HCT116 (cell line): ENCODE measurements at regions of chr7 and their contacts with region 1.

Region 1: GRCh38 chr7:24819916-24820689 is 62.8 kb upstream of the GSDME start:
- DNase-seq: peak; percentile 84
- ATAC-seq: peak; percentile 69
- H3K4me3 ChIP-seq: no peak overlapping the region; a peak in 1 of 4 replicates
- H3K27ac ChIP-seq: peak overlapping the region; percentile 84
- H3K4me1 ChIP-seq: peaks cover 48 to 54% of the 10 kb centered on the region in 2 experiments
- H3K27me3 ChIP-seq: no peaks in the 10 kb centered on the region
- CTCF ChIP-seq: peak; percentile 87 to 96 (median 87)
- POLR2A ChIP-seq: no peak
- RAD21 ChIP-seq: peak; percentile 97

Region 2: DNA sequence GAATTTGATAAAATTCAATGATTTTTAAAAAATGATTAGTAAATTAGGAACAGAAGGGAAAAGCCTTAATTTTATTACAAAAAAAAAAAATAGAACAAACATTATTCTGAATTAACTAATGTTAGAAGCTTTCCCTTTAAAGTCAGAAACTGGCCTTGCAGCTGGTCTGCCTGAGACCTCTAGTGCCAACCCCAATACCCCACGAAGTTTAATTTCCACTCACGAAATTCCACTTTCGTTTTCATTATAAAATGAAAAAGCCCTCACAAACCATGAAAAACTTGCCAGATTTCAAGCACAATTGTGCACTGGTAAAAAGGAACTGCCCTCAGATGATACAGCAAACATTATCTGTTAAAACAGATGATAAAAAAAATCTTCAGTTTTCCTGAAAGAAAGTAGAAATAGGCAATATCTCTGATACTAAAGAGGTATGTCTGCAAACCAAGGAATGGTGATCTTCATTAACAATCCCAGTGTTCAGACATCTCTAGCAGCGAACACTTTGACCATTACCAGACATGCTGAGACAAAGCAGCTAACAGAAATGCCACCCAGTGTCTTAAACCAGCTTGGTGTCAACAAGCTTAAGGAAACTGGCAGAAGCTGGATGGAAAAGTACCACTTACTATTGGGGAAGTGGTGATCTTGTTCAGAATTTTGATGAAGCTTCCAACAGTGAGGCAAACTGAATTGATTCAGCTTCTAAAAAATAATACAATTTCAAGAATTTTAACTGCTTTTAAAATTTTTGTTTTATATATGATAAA is 166.6 kb before region 1 on chr7:
- CTCF ChIA-PET with region 1: no interaction called
- POLR2A ChIA-PET with region 1: no interaction called
- RAD21 ChIA-PET with region 1: no interaction called
- intact Hi-C with region 1: no loop called
- DNase-seq: no peak
- ATAC-seq: no peak
- H3K4me3 ChIP-seq: no peak overlapping the region
- H3K27ac ChIP-seq: no peak overlapping the region
- H3K4me1 ChIP-seq: no peaks in the 10 kb centered on the region
- H3K27me3 ChIP-seq: no peaks in the 10 kb centered on the region
- CTCF ChIP-seq: no peak
- POLR2A ChIP-seq: no peak
- RAD21 ChIP-seq: no peak

Region 3: GRCh38 chr7:24882989-24883621 is 63.0 kb after region 1 on chr7:
- CTCF ChIA-PET with region 1: no interaction called
- POLR2A ChIA-PET with region 1: no interaction called
- RAD21 ChIA-PET with region 1: no interaction called
- intact Hi-C with region 1: loop called (anchors 1 kb)
- DNase-seq: no peak
- ATAC-seq: no peak; the same call in 1 of the 2 replicates
- H3K4me3 ChIP-seq: no peak overlapping the region
- H3K27ac ChIP-seq: no peak overlapping the region
- H3K4me1 ChIP-seq: peaks cover 4 to 6% of the 10 kb centered on the region in 2 experiments; a peak in 1 of 4 replicates
- H3K27me3 ChIP-seq: no peaks in the 10 kb centered on the region
- CTCF ChIP-seq: no peak
- POLR2A ChIP-seq: no peak
- RAD21 ChIP-seq: no peak

Region 4: DNA sequence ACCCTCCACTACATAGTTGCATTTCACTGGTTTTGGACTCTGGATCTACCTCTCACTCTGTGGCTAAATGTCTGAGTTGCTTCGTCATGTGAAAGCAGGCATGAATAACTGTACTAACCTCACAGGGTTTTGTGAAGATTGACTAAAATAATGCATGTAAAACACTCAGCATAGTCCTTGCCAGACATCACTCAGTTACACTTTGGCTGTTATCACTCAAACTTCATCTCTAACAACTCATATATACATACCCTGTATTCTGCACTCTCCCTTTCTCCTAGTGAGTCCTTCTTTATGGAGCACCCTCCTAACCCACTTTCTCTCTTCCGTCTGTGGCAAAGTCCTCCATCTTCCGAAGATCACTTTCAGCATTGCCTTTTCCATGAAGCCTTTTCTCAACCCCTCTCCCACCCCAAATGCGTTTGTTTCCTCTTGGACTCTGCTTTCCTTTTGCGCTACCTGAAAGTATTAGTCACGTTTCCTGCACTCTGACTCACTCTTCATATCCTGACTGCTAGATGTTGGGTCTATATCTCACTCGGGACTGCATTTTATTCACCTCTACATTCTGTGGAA is 87.3 kb after region 1 on chr7:
- CTCF ChIA-PET with region 1: interaction called, 3 read pairs
- POLR2A ChIA-PET with region 1: no interaction called
- RAD21 ChIA-PET with region 1: no interaction called
- intact Hi-C with region 1: loop called (anchors 5 kb)
- DNase-seq: peak; percentile 65
- ATAC-seq: peak; percentile 77
- H3K4me3 ChIP-seq: peak overlapping the region; percentile 32 to 45
- H3K27ac ChIP-seq: peak overlapping the region; percentile 90
- H3K4me1 ChIP-seq: peaks cover 64 to 91% of the 10 kb centered on the region in 2 experiments
- H3K27me3 ChIP-seq: no peaks in the 10 kb centered on the region
- CTCF ChIP-seq: no peak
- POLR2A ChIP-seq: no peak
- RAD21 ChIP-seq: peak; percentile 25; the same call in 1 of the 2 replicates

Region 5: GRCh38 chr7:24979863-24980533 is 159.9 kb after region 1 on chr7 and contains the start of gene OSBPL3:
- CTCF ChIA-PET with region 1: interaction called, 9 read pairs
- POLR2A ChIA-PET with region 1: interaction called, 9 read pairs
- RAD21 ChIA-PET with region 1: interaction called in 1 of 2 experiments, 3 read pairs
- intact Hi-C with region 1: loop called (anchors 1 kb)
- DNase-seq: peak; percentile 92
- ATAC-seq: peak; percentile 80
- H3K4me3 ChIP-seq: peak within 1 kb of the TSS; percentile 55 to 66
- H3K27ac ChIP-seq: peak within 1 kb of the TSS; percentile 89
- H3K4me1 ChIP-seq: peaks cover 14 to 51% of the 10 kb centered on the region in 2 experiments
- H3K27me3 ChIP-seq: no peaks in the 10 kb centered on the region
- CTCF ChIP-seq: no peak
- POLR2A ChIP-seq: peak; percentile 24
- RAD21 ChIP-seq: peak; percentile 35
- total RNA-seq, gene OSBPL3: 36.8 TPM

Region 6: GRCh38 chr7:25069900-25070443 is 249.9 kb after region 1 on chr7:
- CTCF ChIA-PET with region 1: interaction called, 13 read pairs
- POLR2A ChIA-PET with region 1: no interaction called
- RAD21 ChIA-PET with region 1: interaction called in 1 of 2 experiments, 6 read pairs
- intact Hi-C with region 1: loop called (anchors 1 kb)
- DNase-seq: peak; percentile 72
- ATAC-seq: peak; percentile 77
- H3K4me3 ChIP-seq: peak overlapping the region in 1 of 2 experiments; percentile 15; a peak in 1 of 4 replicates
- H3K27ac ChIP-seq: no peak overlapping the region
- H3K4me1 ChIP-seq: peaks cover 0 to 23% of the 10 kb centered on the region in 2 experiments; a peak in 2 of 4 replicates
- H3K27me3 ChIP-seq: no peaks in the 10 kb centered on the region
- CTCF ChIP-seq: peak; percentile 73 to 86 (median 80)
- POLR2A ChIP-seq: no peak
- RAD21 ChIP-seq: peak; percentile 89

Region 7: DNA sequence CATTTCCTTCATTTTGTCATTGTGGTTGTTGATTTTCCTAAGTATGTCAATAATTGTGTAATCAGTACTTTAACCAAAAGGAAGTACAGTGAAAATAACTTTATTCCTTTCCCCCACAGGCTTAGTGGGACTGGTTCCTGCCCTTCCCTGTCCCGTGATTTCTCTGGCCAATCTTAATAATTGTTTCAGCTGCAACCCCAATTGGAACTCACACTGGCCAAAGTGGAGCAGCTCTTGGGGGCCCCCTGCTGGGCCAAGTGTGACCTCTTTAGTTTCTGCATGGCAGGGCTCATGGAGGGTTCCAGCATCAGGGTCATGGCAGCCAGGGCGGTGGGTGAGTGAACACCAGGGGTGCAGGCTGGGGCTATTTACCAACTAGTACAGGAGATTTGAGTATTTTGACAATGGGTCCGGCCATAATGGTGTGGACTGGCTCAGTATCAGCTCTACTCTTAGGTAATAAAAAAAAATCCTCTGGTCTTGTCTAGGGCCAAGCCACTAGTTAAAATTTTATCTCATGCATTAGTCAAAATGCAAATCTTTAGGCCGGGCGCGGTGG is 273.2 kb after region 1 on chr7:
- CTCF ChIA-PET with region 1: interaction called, 26 read pairs
- POLR2A ChIA-PET with region 1: interaction called, 4 read pairs
- RAD21 ChIA-PET with region 1: interaction called, 3 to 5 read pairs
- intact Hi-C with region 1: loop called (anchors 1 kb)
- DNase-seq: peak; percentile 70
- ATAC-seq: peak; percentile 88
- H3K4me3 ChIP-seq: no peak overlapping the region
- H3K27ac ChIP-seq: no peak overlapping the region
- H3K4me1 ChIP-seq: peaks cover 2 to 30% of the 10 kb centered on the region in 2 experiments; a peak in 3 of 4 replicates
- H3K27me3 ChIP-seq: no peaks in the 10 kb centered on the region
- CTCF ChIP-seq: peak; percentile 84 to 92 (median 91)
- POLR2A ChIP-seq: no peak
- RAD21 ChIP-seq: peak; percentile 84